Activated naive CD4-positive, alpha-beta T cell treated with anti-CD3 and anti-CD28 coated beads, Interleukin-2, amount 10 ng/mL, durations not matched to agents 7 days and 5 days (primary cell): ENCODE measurements at regions of chr9 and their contacts with region 1.

Region 1: DNA sequence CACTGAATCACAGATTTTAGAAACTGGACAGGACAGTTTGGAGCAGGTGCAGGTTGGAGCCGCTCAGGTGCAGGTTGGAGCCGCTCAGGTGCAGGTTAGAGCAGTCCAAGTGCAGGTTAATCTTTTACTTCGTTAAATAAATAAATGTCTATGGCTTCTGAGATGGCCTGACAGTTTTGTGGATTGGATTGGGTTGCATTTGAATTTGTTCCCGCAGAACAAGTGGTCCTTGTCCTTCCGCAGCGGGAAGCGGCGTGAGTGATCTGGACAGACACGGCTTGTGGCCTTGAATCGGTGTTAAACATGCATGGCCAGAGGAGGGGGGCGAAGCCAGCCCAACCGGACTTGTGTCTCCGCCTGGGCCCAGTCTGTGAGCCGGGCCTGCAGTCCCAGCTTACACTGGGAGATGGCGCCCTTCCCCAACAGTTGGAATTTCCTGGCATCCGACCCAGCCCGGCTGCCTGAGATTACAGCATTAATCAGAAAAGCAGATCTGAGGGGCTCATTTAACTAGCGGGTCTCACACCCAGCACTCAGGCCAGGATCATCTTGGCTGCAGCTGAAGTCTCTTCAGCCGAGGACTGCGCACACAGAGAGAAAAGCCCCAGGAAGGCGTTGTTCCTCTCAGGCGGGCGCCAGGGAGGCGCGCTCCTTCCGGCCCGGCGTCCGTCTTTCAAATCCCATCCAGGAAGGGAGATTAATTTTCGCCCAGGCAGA is 1.5 kb upstream of the OLFM1 start:
- DNase-seq: peak; percentile 55
- H3K4me3 Mint-ChIP-seq: no peak overlapping the region
- H3K27ac Mint-ChIP-seq: no peak overlapping the region
- H3K4me1 Mint-ChIP-seq: peaks cover 4% of the 10 kb centered on the region
- H3K27me3 Mint-ChIP-seq: peaks cover 64% of the 10 kb centered on the region

Region 2: GRCh38 chr9:135413459-135413858 is 327.5 kb after region 1 on chr9:
- CTCF ChIA-PET with region 1: interaction called, 12 read pairs
- DNase-seq: peak; percentile 19
- H3K4me3 Mint-ChIP-seq: no peak overlapping the region
- H3K27ac Mint-ChIP-seq: no peak overlapping the region
- H3K4me1 Mint-ChIP-seq: no peaks in the 10 kb centered on the region
- H3K27me3 Mint-ChIP-seq: peaks cover 16% of the 10 kb centered on the region